HepG2 (cell line): ENCODE measurements at regions of chr10 and their contacts with region 1.

Region 1: DNA sequence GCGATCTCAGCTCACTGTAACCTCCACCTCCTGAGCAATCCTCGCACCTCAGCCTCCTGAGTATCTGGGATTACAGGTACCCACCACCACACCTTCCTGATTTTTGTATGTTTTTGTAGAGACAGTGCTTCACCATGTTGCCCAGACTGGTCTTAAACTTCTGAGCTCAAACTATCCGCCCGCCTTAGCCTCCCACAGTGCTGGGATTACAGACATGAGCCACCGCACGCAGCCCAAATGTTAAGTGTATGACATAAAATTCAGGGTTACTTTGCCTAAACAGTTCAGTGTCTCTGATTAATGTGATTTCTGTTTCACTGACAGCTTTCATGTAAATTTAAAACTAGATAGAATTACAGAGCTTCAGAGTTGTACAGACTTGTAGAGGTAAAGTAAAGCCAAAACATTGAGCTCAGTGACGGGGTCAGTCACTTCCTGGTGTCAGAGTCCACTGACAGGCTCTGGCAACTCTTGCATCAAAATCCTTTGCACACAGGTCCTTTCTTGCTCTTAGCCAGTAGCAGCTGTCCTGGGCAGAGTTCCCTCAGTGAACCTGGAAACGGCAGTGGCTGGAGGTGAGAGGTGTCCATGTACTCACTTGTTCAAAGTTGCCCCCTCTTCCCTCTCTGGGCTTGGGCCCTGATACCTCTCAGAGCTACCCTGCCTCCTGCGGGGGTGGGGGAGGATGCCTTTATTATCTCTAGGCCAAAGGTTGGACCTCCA is 33.7 kb downstream of the MGMT start:
- DNase-seq: peak; percentile 57
- ATAC-seq: peak; percentile 99
- H3K4me3 ChIP-seq: peak overlapping the region in 1 of 3 experiments; percentile 30; a peak in 2 of 6 replicates
- H3K27ac ChIP-seq: peak overlapping the region; percentile 47
- H3K4me1 ChIP-seq: peaks cover 21% of the 10 kb centered on the region
- H3K27me3 ChIP-seq: no peaks in the 10 kb centered on the region
- CTCF ChIP-seq: no peak
- EP300 ChIP-seq: no peak
- POLR2A ChIP-seq: no peak
- RAD21 ChIP-seq: no peak

Region 2: GRCh38 chr10:129433266-129433665 is 67.5 kb before region 1 on chr10:
- CTCF ChIA-PET with region 1: no interaction called
- POLR2A ChIA-PET with region 1: no interaction called
- in situ Hi-C with region 1: no loop called
- intact Hi-C with region 1: no loop called
- DNase-seq: no peak
- ATAC-seq: no peak
- H3K4me3 ChIP-seq: no peak overlapping the region
- H3K27ac ChIP-seq: no peak overlapping the region
- H3K4me1 ChIP-seq: no peaks in the 10 kb centered on the region
- H3K27me3 ChIP-seq: peaks cover 0 to 11% of the 10 kb centered on the region in 2 experiments; a peak in 1 of 5 replicates
- CTCF ChIP-seq: no peak
- EP300 ChIP-seq: no peak
- POLR2A ChIP-seq: no peak
- RAD21 ChIP-seq: no peak

Region 3: GRCh38 chr10:129466703-129467358 is 33.9 kb before region 1 on chr10 and contains the start of gene MGMT:
- CTCF ChIA-PET with region 1: no interaction called
- POLR2A ChIA-PET with region 1: interaction called, 12 read pairs
- in situ Hi-C with region 1: no loop called
- intact Hi-C with region 1: no loop called
- DNase-seq: peak; percentile 62
- ATAC-seq: peak; percentile 54
- H3K4me3 ChIP-seq: peak within 1 kb of the TSS; percentile 68 to 76 (median 69); a peak in 5 of 6 replicates
- H3K27ac ChIP-seq: peak within 1 kb of the TSS; percentile 86
- H3K4me1 ChIP-seq: peaks cover 87% of the 10 kb centered on the region
- H3K27me3 ChIP-seq: no peaks in the 10 kb centered on the region
- CTCF ChIP-seq: no peak
- EP300 ChIP-seq: no peak
- POLR2A ChIP-seq: peak; percentile 42 to 76; a peak in 3 of 4 replicates
- RAD21 ChIP-seq: no peak
- total RNA-seq, gene MGMT: 19.5 and 20.7 TPM in 2 replicates